ENCODE measurements at regions of chr1 and their contacts with region 1.

Region 1: GRCh38 chr1:43337594-43337993 is at the start of gene MPL:
- DNase-seq: no peak

Region 2: DNA sequence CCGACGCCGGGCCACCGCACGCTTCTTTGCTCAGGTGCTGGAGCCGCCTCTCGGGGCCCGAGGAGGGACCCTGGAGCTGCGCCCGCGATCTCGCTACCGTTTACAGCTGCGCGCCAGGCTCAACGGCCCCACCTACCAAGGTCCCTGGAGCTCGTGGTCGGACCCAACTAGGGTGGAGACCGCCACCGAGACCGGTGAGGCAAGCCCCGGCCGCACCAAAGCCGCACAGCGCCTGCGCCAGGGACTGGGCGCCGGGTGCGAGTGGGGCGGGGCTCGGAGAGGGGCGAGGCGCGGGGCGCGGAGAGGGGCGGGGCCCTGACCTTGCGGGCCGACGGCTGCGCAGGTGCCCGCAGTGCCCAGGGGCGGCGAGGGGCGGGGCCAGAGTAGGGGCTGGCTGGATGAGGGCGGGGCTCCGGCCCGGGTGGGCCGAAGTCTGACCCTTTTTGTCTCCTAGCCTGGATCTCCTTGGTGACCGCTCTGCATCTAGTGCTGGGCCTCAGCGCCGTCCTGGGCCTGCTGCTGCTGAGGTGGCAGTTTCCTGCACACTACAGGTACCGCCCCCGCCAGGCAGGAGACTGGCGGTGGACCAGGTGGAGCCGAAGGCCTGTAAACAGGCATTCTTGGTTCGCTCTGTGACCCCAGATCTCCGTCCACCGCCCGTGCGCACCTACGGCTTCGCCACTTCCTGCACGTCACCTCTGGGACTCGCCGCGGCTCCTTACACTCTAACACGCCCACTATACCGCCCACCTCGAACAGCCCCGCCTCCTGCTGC is 11.4 kb after region 1 on chr1:
- CTCF ChIA-PET with region 1: no interaction called
- POLR2A ChIA-PET with region 1: interaction called, 15 read pairs
- DNase-seq: peak; percentile 95

Region 3: DNA sequence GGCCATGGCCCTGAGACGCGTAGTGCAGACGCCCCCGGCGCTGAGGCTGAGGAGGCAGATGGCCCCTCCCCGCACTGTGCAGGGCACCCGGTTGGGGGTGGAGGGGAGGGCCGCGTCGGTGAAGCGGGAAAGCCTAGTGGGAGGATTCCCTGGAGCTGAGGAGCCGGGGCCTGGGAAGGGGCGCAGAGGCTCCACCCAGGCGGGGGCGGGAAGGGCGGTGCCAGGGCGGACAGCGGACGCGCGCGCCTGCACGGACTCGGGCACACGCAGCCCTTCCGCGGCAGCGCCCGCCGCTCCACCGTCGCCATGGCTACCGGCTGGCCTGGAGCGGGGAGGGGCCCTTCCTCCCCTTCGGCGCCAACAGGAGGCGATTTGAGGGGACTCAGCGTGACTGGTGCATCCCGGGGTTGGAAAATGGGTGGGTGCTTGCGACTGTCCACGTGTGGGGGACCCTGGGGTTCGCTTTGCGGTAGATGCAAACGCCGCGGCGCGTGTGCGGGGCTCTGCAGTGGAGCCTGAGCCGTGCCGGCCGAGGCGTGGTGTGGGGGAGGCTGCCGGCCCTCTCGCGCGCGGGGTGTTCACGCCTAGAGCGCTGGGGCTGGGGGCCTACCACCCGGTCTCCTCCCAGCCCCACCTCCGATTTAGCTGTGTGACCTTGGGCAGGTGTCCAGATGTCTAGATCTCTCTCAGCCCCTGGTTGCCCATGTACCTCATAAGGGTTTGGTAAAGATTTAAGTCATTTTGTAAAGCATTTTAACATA is 228.2 kb after region 1 on chr1:
- CTCF ChIA-PET with region 1: no interaction called
- POLR2A ChIA-PET with region 1: no interaction called
- DNase-seq: no peak

Measured in HEK293T (cell line).